ENCODE measurements at regions of chr13 and their contacts with region 1.

Region 1: GRCh38 chr13:61453121-61453520 is 37.5 kb upstream of the PCDH20 start:
- DNase-seq: no peak
- H3K4me3 Mint-ChIP-seq: no peak overlapping the region
- H3K27ac Mint-ChIP-seq: no peak overlapping the region
- H3K4me1 Mint-ChIP-seq: no peaks in the 10 kb centered on the region
- H3K27me3 Mint-ChIP-seq: no peaks in the 10 kb centered on the region

Region 2: DNA sequence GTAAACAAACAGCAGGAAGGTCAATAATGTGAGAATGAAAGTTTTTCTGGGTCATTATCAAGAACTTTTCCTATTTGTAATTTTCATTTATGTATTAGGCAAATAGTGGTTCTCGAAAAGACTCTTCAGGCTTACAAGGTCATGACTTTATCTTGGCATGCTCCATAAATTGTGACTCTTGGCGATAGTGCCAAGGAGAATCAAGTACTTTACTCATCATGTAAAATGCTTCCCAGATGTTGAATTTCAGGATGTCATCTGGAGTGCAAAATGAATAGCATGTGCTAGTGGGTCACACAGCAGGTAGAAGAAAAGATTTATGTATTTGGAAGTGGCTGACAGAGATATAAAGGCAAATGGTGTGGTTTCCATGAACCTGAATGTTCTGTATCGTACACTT is 1455.2 kb after region 1 on chr13:
- CTCF ChIA-PET with region 1: no interaction called
- intact Hi-C with region 1: loop called (anchors 10 kb)
- DNase-seq: no peak
- H3K4me3 Mint-ChIP-seq: no peak overlapping the region
- H3K27ac Mint-ChIP-seq: no peak overlapping the region
- H3K4me1 Mint-ChIP-seq: no peaks in the 10 kb centered on the region
- H3K27me3 Mint-ChIP-seq: no peaks in the 10 kb centered on the region